CD4-positive, alpha-beta memory T cell (primary cell): ENCODE measurements at regions of chr11 and their contacts with region 1.

Region 1: DNA sequence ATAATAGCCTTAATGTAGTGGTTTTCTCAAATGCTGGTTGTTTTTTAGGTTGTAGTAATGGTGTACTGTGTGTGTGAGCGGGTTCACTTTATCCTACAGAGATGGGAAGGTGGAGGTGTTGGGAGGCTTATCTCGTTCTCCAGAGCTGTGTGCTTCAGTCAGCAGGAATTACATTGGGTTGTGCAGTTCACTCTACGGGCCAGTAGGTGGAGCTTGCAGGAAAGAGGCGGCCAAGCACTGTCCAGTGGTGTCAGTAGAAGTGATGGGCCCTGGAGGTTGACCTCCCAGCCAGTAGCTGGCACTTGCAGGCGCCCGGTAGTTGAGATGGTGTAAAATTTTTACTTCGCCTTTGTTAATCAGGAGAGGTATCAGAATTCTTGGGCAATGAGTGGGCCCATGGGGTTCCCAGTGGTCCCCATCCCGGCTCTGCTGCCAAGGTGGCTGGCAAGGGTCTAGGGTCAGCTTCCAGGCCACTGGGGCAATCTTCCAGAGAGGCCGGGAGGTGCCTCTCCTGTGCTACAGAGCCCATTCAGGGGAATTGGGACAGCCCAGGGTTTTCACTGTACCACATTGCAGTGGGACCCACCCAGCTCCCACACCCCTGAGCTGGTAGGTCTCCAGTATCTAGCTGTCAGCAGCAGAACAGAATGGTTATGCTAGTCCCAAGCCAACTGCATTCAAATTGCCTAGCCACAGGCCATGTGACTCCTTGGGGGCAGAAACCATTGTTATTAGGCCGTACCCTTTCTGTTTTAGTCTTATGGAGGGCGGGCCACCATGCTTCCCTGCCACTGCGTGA is 43.9 kb downstream of the BIRC2 start:
- DNase-seq: peak; percentile 44 to 56 (median 53)
- H3K4me3 ChIP-seq: no peak overlapping the region
- H3K4me3 Mint-ChIP-seq: no peak overlapping the region
- H3K27ac ChIP-seq: no peak overlapping the region
- H3K27ac Mint-ChIP-seq: peak overlapping the region in 6 of 7 donors; percentile 15 to 83 (median 65)
- H3K4me1 ChIP-seq: peaks cover 11% of the 10 kb centered on the region
- H3K4me1 Mint-ChIP-seq: peaks cover 17 to 40% (median 21%) of the 10 kb centered on the region in 4 donors
- H3K27me3 ChIP-seq: no peaks in the 10 kb centered on the region
- H3K27me3 Mint-ChIP-seq: no peaks in the 10 kb centered on the region

Region 2: GRCh38 chr11:102287964-102288724 is 102.7 kb before region 1 on chr11:
- CTCF ChIA-PET with region 1: interaction called, 39 read pairs
- POLR2A ChIA-PET with region 1: interaction called, 3 read pairs
- intact Hi-C with region 1: loop called (anchors 1 kb)
- DNase-seq: peak; percentile 56 to 74 (median 71)
- H3K4me3 ChIP-seq: no peak overlapping the region
- H3K4me3 Mint-ChIP-seq: peak overlapping the region in 5 of 8 donors; percentile 5 to 32 (median 12)
- H3K27ac ChIP-seq: no peak overlapping the region
- H3K27ac Mint-ChIP-seq: peak overlapping the region in 5 of 7 donors; percentile 19 to 79 (median 63)
- H3K4me1 ChIP-seq: peaks cover 18% of the 10 kb centered on the region
- H3K4me1 Mint-ChIP-seq: peaks cover 17 to 36% (median 20%) of the 10 kb centered on the region in 4 donors
- H3K27me3 ChIP-seq: no peaks in the 10 kb centered on the region
- H3K27me3 Mint-ChIP-seq: peaks cover 0 to 2% of the 10 kb centered on the region in 2 donors

Region 3: GRCh38 chr11:102361086-102362031 is 29.5 kb before region 1 on chr11:
- CTCF ChIA-PET with region 1: interaction called, 24 read pairs
- POLR2A ChIA-PET with region 1: interaction called, 3 read pairs
- intact Hi-C with region 1: loop called (anchors 2 kb)
- DNase-seq: peak; percentile 56 to 62 (median 58)
- H3K4me3 ChIP-seq: peak overlapping the region in 1 of 2 donors; percentile 33
- H3K4me3 Mint-ChIP-seq: peak overlapping the region; percentile 68 to 79 (median 74)
- H3K27ac ChIP-seq: peak overlapping the region; percentile 35
- H3K27ac Mint-ChIP-seq: peak overlapping the region; percentile 86 to 99 (median 93)
- H3K4me1 ChIP-seq: peaks cover 55% of the 10 kb centered on the region
- H3K4me1 Mint-ChIP-seq: peaks cover 41 to 76% (median 46%) of the 10 kb centered on the region in 4 donors
- H3K27me3 ChIP-seq: no peaks in the 10 kb centered on the region
- H3K27me3 Mint-ChIP-seq: no peaks in the 10 kb centered on the region

Region 4: GRCh38 chr11:102407901-102408300 is 17.0 kb after region 1 on chr11:
- CTCF ChIA-PET with region 1: interaction called, 53 read pairs
- POLR2A ChIA-PET with region 1: interaction called, 3 read pairs
- intact Hi-C with region 1: no loop called
- DNase-seq: no peak
- H3K4me3 ChIP-seq: no peak overlapping the region
- H3K4me3 Mint-ChIP-seq: peak overlapping the region in 4 of 8 donors; percentile 7 to 23 (median 17)
- H3K27ac ChIP-seq: peak overlapping the region; percentile 7
- H3K27ac Mint-ChIP-seq: peak overlapping the region in 6 of 7 donors; percentile 25 to 91 (median 56)
- H3K4me1 ChIP-seq: peaks cover 83% of the 10 kb centered on the region
- H3K4me1 Mint-ChIP-seq: peaks cover 58 to 85% (median 70%) of the 10 kb centered on the region in 4 donors
- H3K27me3 ChIP-seq: no peaks in the 10 kb centered on the region
- H3K27me3 Mint-ChIP-seq: no peaks in the 10 kb centered on the region

Region 5: GRCh38 chr11:102429691-102430090 is 38.8 kb after region 1 on chr11:
- CTCF ChIA-PET with region 1: interaction called, 23 read pairs
- POLR2A ChIA-PET with region 1: interaction called, 5 read pairs
- intact Hi-C with region 1: no loop called
- DNase-seq: no peak
- H3K4me3 ChIP-seq: no peak overlapping the region
- H3K4me3 Mint-ChIP-seq: peak overlapping the region in 5 of 8 donors; percentile 21 to 73 (median 56)
- H3K27ac ChIP-seq: peak overlapping the region; percentile 18
- H3K27ac Mint-ChIP-seq: peak overlapping the region; percentile 71 to 95 (median 84)
- H3K4me1 ChIP-seq: peaks cover 58% of the 10 kb centered on the region
- H3K4me1 Mint-ChIP-seq: peaks cover 58 to 86% (median 65%) of the 10 kb centered on the region in 4 donors
- H3K27me3 ChIP-seq: no peaks in the 10 kb centered on the region
- H3K27me3 Mint-ChIP-seq: no peaks in the 10 kb centered on the region

Region 6: GRCh38 chr11:102488208-102488607 is 97.3 kb after region 1 on chr11:
- CTCF ChIA-PET with region 1: interaction called, 14 read pairs
- POLR2A ChIA-PET with region 1: interaction called, 4 read pairs
- intact Hi-C with region 1: no loop called
- DNase-seq: no peak
- H3K4me3 ChIP-seq: no peak overlapping the region
- H3K4me3 Mint-ChIP-seq: no peak overlapping the region
- H3K27ac ChIP-seq: no peak overlapping the region
- H3K27ac Mint-ChIP-seq: peak overlapping the region in 1 of 7 donors; percentile 7
- H3K4me1 ChIP-seq: no peaks in the 10 kb centered on the region
- H3K4me1 Mint-ChIP-seq: peaks cover 0 to 6% (median 2%) of the 10 kb centered on the region in 4 donors
- H3K27me3 ChIP-seq: no peaks in the 10 kb centered on the region
- H3K27me3 Mint-ChIP-seq: peaks cover 0 to 3% of the 10 kb centered on the region in 2 donors